ENCODE measurements at regions of chr21 and their contacts with region 1.

Region 1: DNA sequence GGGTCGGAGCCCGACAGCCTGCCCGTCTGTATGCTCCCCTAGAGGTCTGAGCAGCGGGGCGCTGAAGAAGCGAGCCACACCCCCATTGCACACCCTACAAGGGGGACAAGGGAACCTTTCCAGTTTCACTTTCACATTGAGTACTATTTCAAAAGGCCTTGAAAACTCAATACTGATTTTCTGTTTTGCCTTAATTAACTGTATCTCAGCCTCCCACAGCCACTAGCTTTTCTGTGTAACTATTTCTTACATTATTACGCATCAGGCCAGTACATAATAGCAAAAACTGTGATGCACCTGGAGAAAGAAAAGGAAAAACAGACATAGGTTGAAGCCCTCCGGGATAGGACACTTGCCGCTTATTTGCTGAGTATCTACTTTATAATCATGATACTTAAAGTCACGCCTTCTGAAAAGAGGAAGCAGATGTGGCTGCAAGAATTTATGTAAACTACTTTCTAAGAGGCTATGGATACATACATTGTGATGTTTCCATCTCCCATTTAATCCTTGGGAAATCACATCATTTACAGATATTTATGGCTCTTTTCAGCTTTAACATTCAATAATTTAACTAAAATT is 1719.5 kb downstream of the MRPL39 start:
- DNase-seq: peak; percentile 5
- H3K4me3 Mint-ChIP-seq: peak overlapping the region; percentile 44
- H3K27ac Mint-ChIP-seq: no peak overlapping the region
- H3K4me1 Mint-ChIP-seq: peaks cover 5% of the 10 kb centered on the region
- H3K27me3 Mint-ChIP-seq: no peaks in the 10 kb centered on the region

Region 2: GRCh38 chr21:23471877-23472276 is 415.9 kb before region 1 on chr21:
- CTCF ChIA-PET with region 1: no interaction called
- intact Hi-C with region 1: no loop called
- DNase-seq: no peak
- H3K4me3 Mint-ChIP-seq: no peak overlapping the region
- H3K27ac Mint-ChIP-seq: no peak overlapping the region
- H3K4me1 Mint-ChIP-seq: no peaks in the 10 kb centered on the region
- H3K27me3 Mint-ChIP-seq: no peaks in the 10 kb centered on the region

Region 3: GRCh38 chr21:23789864-23790263 is 98.0 kb before region 1 on chr21:
- CTCF ChIA-PET with region 1: no interaction called
- intact Hi-C with region 1: no loop called
- DNase-seq: no peak
- H3K4me3 Mint-ChIP-seq: no peak overlapping the region
- H3K27ac Mint-ChIP-seq: no peak overlapping the region
- H3K4me1 Mint-ChIP-seq: no peaks in the 10 kb centered on the region
- H3K27me3 Mint-ChIP-seq: no peaks in the 10 kb centered on the region

Region 4: DNA sequence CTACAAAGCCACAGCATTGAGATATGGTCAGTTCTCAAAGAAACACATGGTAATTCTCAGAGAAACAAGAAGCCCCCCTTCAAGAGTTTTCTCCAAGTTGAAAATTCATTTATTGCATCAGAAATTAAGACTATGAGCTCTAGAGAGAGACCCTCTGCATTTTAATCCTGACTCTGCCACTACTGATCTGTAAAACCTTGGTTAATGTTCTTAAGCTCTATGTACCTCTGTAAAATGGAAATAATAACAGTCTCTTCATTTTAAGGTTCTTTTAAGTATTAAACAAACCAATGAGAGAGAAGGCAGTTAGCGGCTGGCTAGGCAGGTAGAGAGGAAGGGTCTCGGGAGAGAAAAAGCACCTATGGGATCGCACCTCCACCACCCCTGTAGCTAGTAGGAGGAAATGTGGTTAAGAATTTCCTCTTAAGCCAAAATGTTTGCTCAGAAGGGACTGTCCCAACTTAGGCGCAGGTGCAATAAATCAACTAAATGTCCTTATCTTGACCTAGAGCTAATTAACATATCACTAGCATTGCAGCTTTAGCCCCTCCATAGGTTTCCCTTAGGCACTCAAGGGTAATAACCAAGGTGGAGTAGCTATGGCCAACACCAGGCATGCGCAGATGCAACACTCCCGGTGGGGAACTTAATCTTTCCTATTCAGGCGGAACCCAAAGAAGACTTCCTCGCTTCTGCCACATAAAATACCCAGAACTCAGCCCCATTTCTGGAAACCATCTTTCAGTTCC is 34.0 kb after region 1 on chr21:
- CTCF ChIA-PET with region 1: no interaction called
- intact Hi-C with region 1: loop called (anchors 5 kb)
- DNase-seq: peak; percentile 18
- H3K4me3 Mint-ChIP-seq: no peak overlapping the region
- H3K27ac Mint-ChIP-seq: no peak overlapping the region
- H3K4me1 Mint-ChIP-seq: peaks cover 14% of the 10 kb centered on the region
- H3K27me3 Mint-ChIP-seq: no peaks in the 10 kb centered on the region

Measured in activated naive CD4-positive, alpha-beta T cell treated with anti-CD3 and anti-CD28 coated beads for 36 hours (primary cell).